Naive thymus-derived CD4-positive, alpha-beta T cell (primary cell): ENCODE measurements at regions of chr19 and their contacts with region 1.

Region 1: GRCh38 chr19:17579661-17580244 is 24.3 kb downstream of the COLGALT1 start:
- DNase-seq: peak in 3 of 9 donors; percentile 15 to 48 (median 30)
- ATAC-seq: peak; percentile 77
- H3K4me3 ChIP-seq: no peak overlapping the region
- H3K4me3 Mint-ChIP-seq: no peak overlapping the region
- H3K27ac ChIP-seq: no peak overlapping the region
- H3K27ac Mint-ChIP-seq: peak overlapping the region in 5 of 9 donors; percentile 37 to 68 (median 59)
- H3K4me1 ChIP-seq: no peaks in the 10 kb centered on the region
- H3K4me1 Mint-ChIP-seq: peaks cover 0 to 9% (median 0%) of the 10 kb centered on the region in 7 donors
- H3K27me3 ChIP-seq: no peaks in the 10 kb centered on the region
- H3K27me3 Mint-ChIP-seq: no peaks in the 10 kb centered on the region

Region 2: GRCh38 chr19:17448131-17448967 is 131.4 kb before region 1 on chr19 and contains the start of gene TMEM221:
- CTCF ChIA-PET with region 1: interaction called, 3 read pairs
- POLR2A ChIA-PET with region 1: no interaction called
- intact Hi-C with region 1: loop called (anchors 1 kb)
- DNase-seq: peak; percentile 37 to 67 (median 50)
- ATAC-seq: peak; percentile 89
- H3K4me3 ChIP-seq: peak within 1 kb of the TSS; percentile 39
- H3K4me3 Mint-ChIP-seq: peak within 1 kb of the TSS in 9 of 10 donors; percentile 16 to 68 (median 58)
- H3K27ac ChIP-seq: no peak within 1 kb of the TSS
- H3K27ac Mint-ChIP-seq: no peak within 1 kb of the TSS
- H3K4me1 ChIP-seq: no peaks in the 10 kb centered on the region
- H3K4me1 Mint-ChIP-seq: peaks cover 0 to 16% (median 10%) of the 10 kb centered on the region in 7 donors
- H3K27me3 ChIP-seq: no peaks in the 10 kb centered on the region
- H3K27me3 Mint-ChIP-seq: peaks cover 2 to 26% (median 8%) of the 10 kb centered on the region in 5 donors
- total RNA-seq, gene TMEM221: not detected

Region 3: DNA sequence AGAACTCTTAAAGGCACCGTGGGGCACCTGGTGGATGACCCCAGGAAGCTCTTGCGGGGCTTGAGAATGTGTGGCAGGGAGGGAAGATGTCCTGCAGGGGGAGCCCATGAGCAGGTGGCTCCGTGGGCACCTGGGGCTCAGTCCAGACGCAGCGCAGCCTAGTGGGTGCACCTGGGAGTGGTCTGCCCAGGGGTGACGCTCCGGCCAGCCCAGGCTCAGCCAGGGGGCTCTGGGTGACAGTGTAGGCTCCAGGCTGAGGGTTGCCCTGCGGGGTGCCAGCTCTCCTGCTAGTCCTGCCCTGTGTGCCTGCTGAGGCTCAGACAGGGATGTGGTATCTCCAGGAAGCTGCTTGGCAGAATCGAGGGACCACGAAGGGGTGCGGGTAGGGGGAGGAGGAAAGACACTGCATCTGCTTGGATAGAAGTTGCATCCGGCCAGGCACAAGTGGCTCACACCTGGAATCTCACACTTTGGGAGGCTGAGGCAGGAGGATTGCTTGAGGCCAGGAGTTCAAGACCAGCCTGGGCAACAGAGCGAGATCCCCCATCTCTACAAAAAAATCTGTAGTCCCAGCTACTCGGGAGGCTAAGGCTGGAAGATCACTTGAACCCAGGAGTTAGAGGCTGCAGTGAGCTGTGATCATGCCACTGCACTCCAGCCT is 83.3 kb before region 1 on chr19:
- CTCF ChIA-PET with region 1: interaction called, 10 read pairs
- POLR2A ChIA-PET with region 1: no interaction called
- intact Hi-C with region 1: loop called (anchors 1 kb)
- DNase-seq: peak; percentile 61 to 82 (median 71)
- ATAC-seq: peak; percentile 100
- H3K4me3 ChIP-seq: peak overlapping the region; percentile 16
- H3K4me3 Mint-ChIP-seq: peak overlapping the region in 4 of 10 donors; percentile 11 to 46 (median 23)
- H3K27ac ChIP-seq: no peak overlapping the region
- H3K27ac Mint-ChIP-seq: peak overlapping the region in 4 of 9 donors; percentile 26 to 72 (median 50)
- H3K4me1 ChIP-seq: peaks cover 8 to 15% of the 10 kb centered on the region in 2 donors
- H3K4me1 Mint-ChIP-seq: peaks cover 13 to 30% (median 27%) of the 10 kb centered on the region in 7 donors
- H3K27me3 ChIP-seq: no peaks in the 10 kb centered on the region
- H3K27me3 Mint-ChIP-seq: no peaks in the 10 kb centered on the region

Region 4: GRCh38 chr19:17539238-17540117 is 40.3 kb before region 1 on chr19:
- CTCF ChIA-PET with region 1: no interaction called
- POLR2A ChIA-PET with region 1: no interaction called
- intact Hi-C with region 1: loop called in 1 of 2 experiments (anchors 1 kb)
- DNase-seq: peak; percentile 87 to 99 (median 94)
- ATAC-seq: peak; percentile 100
- H3K4me3 ChIP-seq: peak overlapping the region; percentile 68
- H3K4me3 Mint-ChIP-seq: peak overlapping the region; percentile 84 to 90 (median 86)
- H3K27ac ChIP-seq: peak overlapping the region; percentile 67
- H3K27ac Mint-ChIP-seq: peak overlapping the region; percentile 16 to 81 (median 62)
- H3K4me1 ChIP-seq: peaks cover 9 to 10% of the 10 kb centered on the region in 2 donors
- H3K4me1 Mint-ChIP-seq: peaks cover 7 to 23% (median 16%) of the 10 kb centered on the region in 7 donors
- H3K27me3 ChIP-seq: no peaks in the 10 kb centered on the region
- H3K27me3 Mint-ChIP-seq: peaks cover 0 to 34% (median 0%) of the 10 kb centered on the region in 5 donors

Region 5: DNA sequence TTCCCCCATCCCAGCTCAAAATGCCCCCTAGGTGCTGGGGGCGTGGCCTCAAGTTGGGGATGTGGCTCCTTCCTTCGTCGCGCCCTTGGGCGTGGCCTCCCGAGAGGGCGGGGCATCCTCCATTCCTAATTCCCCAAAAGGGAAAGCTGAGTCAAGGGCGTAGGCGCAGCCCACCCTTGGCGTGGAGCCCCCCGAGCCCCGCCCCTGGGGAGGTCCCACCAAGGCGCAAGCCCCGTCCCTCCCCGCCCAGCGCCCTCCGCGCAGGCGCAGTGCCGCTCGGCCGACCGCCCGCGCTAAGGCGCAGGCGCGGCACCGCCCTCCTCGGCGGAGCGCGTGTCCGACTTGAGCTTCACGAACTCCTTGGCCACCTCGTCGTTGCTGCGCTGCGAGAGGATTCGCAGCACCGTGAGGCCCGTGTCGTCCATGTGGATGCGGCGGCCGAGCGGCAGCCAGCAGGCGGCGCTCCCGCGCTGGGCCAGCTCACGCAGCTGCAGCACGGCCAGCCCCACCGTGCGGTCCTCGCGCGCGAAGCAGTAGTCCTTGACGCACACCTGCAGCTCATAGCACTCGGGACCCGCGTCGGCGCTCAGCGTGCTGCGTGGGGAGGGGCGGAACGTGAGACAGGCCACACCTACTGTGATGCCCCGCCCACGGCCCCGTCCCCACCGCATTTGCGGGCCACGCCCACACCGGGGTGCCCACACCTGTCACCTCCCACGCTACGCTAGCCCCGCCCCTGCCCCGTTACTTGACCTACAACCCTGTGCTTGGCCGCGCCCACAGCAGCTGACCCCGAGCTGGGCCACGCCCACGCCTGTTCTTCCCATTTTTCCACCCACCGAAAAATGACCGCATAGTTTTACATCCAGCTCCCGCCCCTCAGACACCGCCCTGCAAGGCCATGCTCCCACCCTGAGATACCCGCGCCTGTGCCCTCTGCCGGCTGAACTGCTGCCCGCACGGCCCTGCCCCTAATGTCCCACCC is 26.3 kb after region 1 on chr19:
- CTCF ChIA-PET with region 1: no interaction called
- POLR2A ChIA-PET with region 1: no interaction called
- intact Hi-C with region 1: no loop called
- DNase-seq: peak; percentile 72 to 93 (median 87)
- ATAC-seq: peak; percentile 96
- H3K4me3 ChIP-seq: peak overlapping the region; percentile 63
- H3K4me3 Mint-ChIP-seq: peak overlapping the region; percentile 64 to 91 (median 81)
- H3K27ac ChIP-seq: peak overlapping the region; percentile 48
- H3K27ac Mint-ChIP-seq: peak overlapping the region in 7 of 9 donors; percentile 63 to 84 (median 74)
- H3K4me1 ChIP-seq: peaks cover 2 to 7% of the 10 kb centered on the region in 2 donors
- H3K4me1 Mint-ChIP-seq: peaks cover 0 to 14% (median 10%) of the 10 kb centered on the region in 7 donors
- H3K27me3 ChIP-seq: no peaks in the 10 kb centered on the region
- H3K27me3 Mint-ChIP-seq: peaks cover 29 to 45% (median 33%) of the 10 kb centered on the region in 5 donors